Ascending aorta (tissue), 2 donors: ENCODE measurements at regions of chr4 and their contacts with region 1.

Region 1: DNA sequence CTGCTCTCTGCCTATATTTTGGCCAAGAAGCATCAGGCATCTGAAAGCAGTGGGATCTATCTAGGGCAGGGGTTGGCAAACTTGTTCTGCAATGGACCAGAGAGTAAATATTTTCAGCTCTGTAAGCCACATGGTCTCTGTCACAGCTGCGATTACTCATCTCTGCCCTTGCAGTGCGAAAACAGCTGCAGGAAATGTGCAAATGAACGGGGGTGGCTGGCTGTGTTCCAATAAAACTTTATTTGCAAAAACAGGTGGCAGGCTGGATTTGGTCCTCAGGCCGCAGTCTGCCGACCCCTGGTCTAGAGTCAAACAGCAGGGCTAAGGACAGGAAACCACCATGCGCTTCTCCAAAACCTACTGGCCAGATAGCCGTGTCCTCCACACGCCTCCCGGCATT is 48.6 kb downstream of the ACOX3 start:
- DNase-seq: no peak
- H3K4me3 ChIP-seq: no peak overlapping the region
- H3K27ac ChIP-seq: peak overlapping the region; percentile 38 to 57
- H3K4me1 ChIP-seq: peaks cover 6 to 24% of the 10 kb centered on the region in 2 donors
- H3K27me3 ChIP-seq: no peaks in the 10 kb centered on the region
- CTCF ChIP-seq: no peak

Region 2: DNA sequence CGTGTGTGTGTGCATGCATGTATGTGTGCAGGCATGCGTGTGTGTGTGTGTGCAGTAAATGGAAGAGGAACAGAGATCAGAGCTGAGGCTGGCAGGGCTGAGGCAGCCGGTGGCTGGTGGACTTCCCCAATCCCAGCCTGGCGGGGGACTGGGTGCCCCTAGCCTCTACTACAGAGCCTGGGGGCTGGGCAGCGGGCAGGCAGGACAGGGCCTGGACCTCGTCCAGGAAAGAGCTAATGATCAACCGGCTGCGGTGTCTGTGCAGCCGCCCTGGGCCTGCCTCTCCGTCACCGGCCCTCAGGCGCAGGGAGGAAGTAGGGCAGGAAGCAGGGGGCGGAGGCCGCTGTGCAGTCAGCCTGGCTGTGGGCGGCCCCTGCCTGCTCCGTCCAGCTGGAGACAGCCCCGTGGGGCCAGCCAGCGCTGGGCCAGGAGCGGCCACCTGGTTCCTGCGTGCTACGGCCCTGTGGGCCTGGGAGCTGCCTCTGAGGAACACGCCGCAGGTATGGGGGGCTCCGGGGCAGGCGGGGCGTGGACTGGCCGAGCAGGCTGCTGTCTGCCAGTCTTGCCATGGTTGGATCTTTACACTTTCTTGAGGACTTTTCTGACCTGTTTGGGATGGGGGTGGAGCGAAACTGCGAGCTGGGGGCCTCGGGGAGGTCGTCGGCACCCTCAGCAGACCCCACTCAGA is 192.9 kb before region 1 on chr4 and contains the start of gene SH3TC1:
- intact Hi-C with region 1: loop called (anchors 5 kb)
- DNase-seq: peak; percentile 77 to 92
- H3K4me3 ChIP-seq: peak within 1 kb of the TSS; percentile 48 to 59
- H3K27ac ChIP-seq: peak within 1 kb of the TSS; percentile 55 to 64
- H3K4me1 ChIP-seq: peaks cover 8 to 15% of the 10 kb centered on the region in 2 donors
- H3K27me3 ChIP-seq: no peaks in the 10 kb centered on the region
- CTCF ChIP-seq: no peak
- total RNA-seq, gene SH3TC1: 64.5 TPM

Region 3: DNA sequence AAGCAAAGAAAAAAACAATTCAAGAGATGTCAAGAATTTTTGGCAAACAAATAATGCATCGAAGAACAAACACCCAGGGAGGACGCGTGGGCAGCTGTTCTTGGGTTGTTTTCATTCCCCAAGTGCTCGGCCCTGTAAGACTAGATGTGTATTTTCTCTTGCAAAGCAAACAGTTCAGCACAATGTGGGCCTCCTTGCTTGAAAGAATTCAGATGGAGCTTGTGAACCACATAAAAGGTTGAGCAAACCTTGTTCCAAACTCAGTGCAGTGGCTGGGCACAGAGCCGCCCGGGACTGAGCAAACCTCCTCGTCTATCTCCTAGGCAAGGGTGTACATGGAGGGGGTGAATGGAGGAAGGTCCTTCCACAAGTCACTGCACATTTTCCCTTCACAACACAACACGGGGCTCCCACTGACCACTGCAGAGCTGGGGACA is 40.0 kb before region 1 on chr4:
- intact Hi-C with region 1: no loop called
- DNase-seq: peak in 1 of 2 donors; percentile 62
- H3K4me3 ChIP-seq: no peak overlapping the region
- H3K27ac ChIP-seq: peak overlapping the region; percentile 34 to 53
- H3K4me1 ChIP-seq: peaks cover under 1 to 12% of the 10 kb centered on the region in 2 donors
- H3K27me3 ChIP-seq: no peaks in the 10 kb centered on the region
- CTCF ChIP-seq: no peak